ENCODE measurements at regions of chr6 and their contacts with region 1.

Region 1: GRCh38 chr6:3209114-3210023 is 18.1 kb downstream of the TUBB2B start:
- DNase-seq: peak; percentile 60
- CTCF ChIP-seq: peak; percentile 43

Region 2: DNA sequence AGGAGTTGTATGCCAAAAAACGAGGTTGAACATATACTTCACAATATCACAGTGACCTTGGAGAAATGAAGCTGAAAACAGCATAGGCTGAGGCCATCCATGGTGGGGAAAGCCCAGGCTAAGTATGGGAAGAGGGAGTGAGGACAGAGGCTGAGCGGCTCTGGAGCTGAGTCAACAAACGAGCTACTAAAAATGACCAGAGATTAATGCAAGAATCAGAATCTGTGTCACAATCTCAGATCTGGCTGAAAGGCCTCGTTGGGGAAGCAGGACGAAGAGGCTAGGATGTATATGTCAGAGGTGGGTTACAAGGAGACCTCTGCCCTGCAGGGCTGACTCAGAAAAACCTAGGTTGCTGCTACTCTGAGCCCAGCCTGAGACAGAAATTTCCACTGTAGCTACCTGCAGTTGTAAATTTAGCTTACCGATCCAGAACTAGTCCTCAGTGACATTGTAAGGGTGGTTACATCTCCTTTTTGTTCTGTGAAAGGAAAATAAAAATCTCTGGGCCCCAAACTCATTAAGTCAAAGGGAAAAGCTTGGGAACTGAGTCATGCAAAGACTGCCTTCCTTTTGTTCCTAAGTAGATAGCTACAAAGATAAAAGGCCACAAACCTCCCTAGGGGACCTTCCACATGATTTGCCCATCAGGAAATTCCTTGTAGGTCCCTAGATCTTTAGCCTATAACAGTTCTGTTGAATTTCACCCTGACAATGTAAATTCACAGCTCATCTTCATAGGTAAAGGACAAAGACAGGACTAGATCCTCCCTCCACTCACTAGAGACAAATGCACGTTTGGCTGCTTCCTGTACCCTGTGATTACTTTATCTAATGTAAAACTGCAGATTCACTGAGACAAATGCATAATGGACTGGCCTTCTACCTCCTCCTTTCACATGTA is 43.5 kb before region 1 on chr6:
- CTCF ChIA-PET with region 1: interaction called, 10 read pairs
- POLR2A ChIA-PET with region 1: no interaction called
- DNase-seq: no peak
- CTCF ChIP-seq: no peak

Region 3: GRCh38 chr6:3194535-3195419 is 14.6 kb before region 1 on chr6:
- CTCF ChIA-PET with region 1: interaction called, 16 read pairs
- POLR2A ChIA-PET with region 1: no interaction called
- DNase-seq: peak; percentile 59
- CTCF ChIP-seq: no peak

Measured in GM10248 (cell line).